IMR-90 (cell line): ENCODE measurements at regions of chr10 and their contacts with region 1.

Region 1: GRCh38 chr10:97072851-97073665 is 112.7 kb downstream of the SLIT1 start:
- DNase-seq: peak; percentile 71
- ATAC-seq: peak; percentile 96
- H3K4me3 ChIP-seq: no peak overlapping the region
- H3K27ac ChIP-seq: no peak overlapping the region
- H3K4me1 ChIP-seq: no peaks in the 10 kb centered on the region
- H3K27me3 ChIP-seq: peaks cover 50% of the 10 kb centered on the region
- CTCF ChIP-seq: peak; percentile 94
- POLR2A ChIP-seq: 0 out of 2 replicates have a peak, but pooled peaks have one; percentile 29
- RAD21 ChIP-seq: peak; percentile 93

Region 2: DNA sequence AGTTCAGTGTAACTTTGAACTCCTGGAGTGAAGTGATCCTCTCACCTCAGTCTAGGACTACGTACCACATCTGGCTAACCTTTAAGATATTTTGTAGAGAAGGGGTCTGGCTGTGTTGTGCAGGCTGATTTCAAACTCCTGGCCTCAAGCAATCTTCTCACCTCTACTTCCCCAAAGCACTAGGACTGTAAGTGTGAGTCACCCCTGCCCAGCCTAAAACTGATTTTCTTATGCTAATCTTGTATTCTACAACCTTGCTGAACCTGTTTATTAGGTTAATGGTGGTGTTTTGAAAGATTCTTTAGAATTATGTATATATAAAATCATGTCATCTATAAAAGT is 182.9 kb before region 1 on chr10:
- CTCF ChIA-PET with region 1: no interaction called
- POLR2A ChIA-PET with region 1: no interaction called
- dilution Hi-C with region 1: no loop called
- in situ Hi-C with region 1: no loop called
- intact Hi-C with region 1: no loop called
- DNase-seq: no peak
- ATAC-seq: no peak
- H3K4me3 ChIP-seq: no peak overlapping the region
- H3K27ac ChIP-seq: no peak overlapping the region
- H3K4me1 ChIP-seq: 0 out of 2 replicates have a peak, but pooled peaks cover 1% of the 10 kb centered on the region
- H3K27me3 ChIP-seq: no peaks in the 10 kb centered on the region
- CTCF ChIP-seq: no peak
- POLR2A ChIP-seq: no peak
- RAD21 ChIP-seq: no peak

Region 3: DNA sequence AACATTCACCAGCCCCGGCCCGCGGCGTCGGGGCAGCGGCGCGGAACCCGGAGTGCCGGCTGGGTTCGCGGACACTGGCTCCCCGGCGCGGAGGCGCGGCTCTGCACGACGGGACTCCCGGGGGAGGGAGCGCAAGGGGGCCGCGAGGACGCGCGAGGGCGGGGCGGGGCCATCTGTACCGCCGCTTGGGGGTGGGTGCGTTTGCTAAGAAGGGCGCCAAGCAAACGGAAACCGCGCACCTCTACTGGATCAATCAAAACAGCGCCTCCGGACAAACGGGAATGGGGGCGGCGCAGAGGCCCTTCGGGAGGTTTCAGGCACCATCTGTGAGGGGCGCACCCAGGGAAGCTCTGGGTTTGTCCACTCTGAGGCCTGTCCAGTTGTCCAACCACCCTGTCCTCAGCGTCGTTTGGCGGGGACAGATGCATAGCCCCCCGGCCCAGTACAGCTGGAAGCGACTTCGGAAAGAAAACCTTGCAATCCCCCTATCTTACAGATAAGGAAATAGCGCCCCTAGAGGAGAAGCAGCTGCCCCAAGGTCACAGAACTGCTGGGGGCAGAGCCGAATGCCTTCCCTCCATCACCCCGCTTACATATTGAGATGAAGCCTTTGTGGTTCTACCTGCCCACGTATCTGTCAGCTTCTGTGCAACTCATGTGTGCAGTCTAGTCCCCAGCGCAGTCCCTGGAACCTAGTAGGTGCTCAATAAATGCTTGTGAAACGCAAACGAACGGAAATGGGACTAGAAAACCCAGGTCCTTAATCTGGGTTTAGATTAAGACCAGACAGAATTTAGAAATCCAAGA is 123.4 kb after region 1 on chr10:
- CTCF ChIA-PET with region 1: interaction called, 6 read pairs
- POLR2A ChIA-PET with region 1: no interaction called
- dilution Hi-C with region 1: no loop called
- in situ Hi-C with region 1: loop called (anchors 10 kb)
- intact Hi-C with region 1: no loop called
- DNase-seq: peak; percentile 43
- ATAC-seq: peak; percentile 91
- H3K4me3 ChIP-seq: peak overlapping the region; percentile 47
- H3K27ac ChIP-seq: no peak overlapping the region
- H3K4me1 ChIP-seq: no peaks in the 10 kb centered on the region
- H3K27me3 ChIP-seq: peaks cover 49% of the 10 kb centered on the region
- CTCF ChIP-seq: peak; percentile 56
- POLR2A ChIP-seq: no peak
- RAD21 ChIP-seq: peak; percentile 31

Region 4: DNA sequence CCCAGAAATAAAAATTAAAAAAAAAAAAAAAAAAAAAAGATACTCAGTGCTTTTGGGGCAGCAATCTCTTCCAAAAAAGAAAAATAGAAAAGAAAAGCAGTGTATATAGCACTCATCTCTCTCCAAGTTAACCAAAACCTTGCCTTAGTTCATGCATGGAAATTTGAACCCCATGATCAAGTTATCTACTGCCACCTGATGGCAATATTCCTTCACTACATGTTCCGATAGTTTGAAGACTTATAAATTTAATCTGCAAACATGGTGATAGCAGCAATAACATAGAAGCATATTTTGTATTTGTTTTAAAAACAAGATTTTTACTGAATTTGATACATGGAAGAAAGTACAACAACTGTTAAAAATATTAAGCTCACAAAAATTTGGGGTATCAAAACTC is 161.3 kb after region 1 on chr10:
- CTCF ChIA-PET with region 1: interaction called, 10 read pairs
- POLR2A ChIA-PET with region 1: no interaction called
- dilution Hi-C with region 1: no loop called
- in situ Hi-C with region 1: no loop called
- intact Hi-C with region 1: loop called (anchors 1 kb)
- DNase-seq: peak; percentile 64
- ATAC-seq: peak; percentile 61
- H3K4me3 ChIP-seq: no peak overlapping the region
- H3K27ac ChIP-seq: no peak overlapping the region
- H3K4me1 ChIP-seq: peaks cover 2% of the 10 kb centered on the region; the same call in 1 of the 2 replicates
- H3K27me3 ChIP-seq: no peaks in the 10 kb centered on the region
- CTCF ChIP-seq: peak; percentile 76
- POLR2A ChIP-seq: no peak
- RAD21 ChIP-seq: peak; percentile 84

Region 5: DNA sequence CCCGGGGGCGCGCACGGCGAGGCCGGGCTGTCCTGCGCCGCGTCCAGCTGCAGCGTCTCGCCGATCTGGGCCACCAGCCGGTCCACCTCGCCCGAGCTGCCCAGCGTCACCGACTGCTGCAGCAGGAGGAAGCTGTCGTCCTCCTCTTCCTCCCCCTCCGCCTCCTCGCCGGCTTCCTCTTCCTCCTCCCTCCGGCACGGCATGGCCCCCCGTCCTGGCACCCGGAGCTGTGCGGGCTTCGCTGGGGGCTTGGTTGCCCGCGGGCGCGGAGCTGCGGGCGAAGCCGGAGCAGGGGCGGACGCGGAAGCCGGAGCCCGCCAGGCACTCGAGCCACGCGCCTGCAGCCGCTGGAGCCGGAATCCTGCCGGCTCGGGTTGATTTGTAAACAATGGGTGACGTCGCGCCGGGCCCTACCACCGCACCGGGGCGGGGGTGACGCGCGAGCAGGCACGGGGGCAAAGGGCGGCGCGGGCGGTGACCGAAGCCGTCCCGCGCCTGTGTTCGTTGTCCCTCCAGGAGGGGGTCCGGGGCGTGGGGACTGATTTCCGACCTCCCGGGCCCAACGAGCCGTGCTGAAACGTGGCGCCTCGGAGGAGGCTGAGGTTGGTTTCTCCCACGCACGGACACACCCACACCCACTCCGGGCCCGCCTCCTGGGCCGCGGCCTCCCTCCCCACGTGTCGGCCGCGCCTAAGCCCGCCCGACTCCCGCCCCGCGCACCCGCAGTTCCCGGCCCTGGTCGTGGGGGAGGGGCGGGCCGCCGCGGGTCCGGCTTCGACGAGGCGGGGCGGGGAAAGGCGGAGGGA is 261.5 kb after region 1 on chr10 and contains the start of gene FRAT2:
- CTCF ChIA-PET with region 1: interaction called, 6 read pairs
- POLR2A ChIA-PET with region 1: no interaction called
- dilution Hi-C with region 1: no loop called
- in situ Hi-C with region 1: no loop called
- intact Hi-C with region 1: loop called (anchors 2 kb)
- DNase-seq: peak; percentile 91
- ATAC-seq: peak; percentile 90
- H3K4me3 ChIP-seq: peak within 1 kb of the TSS; percentile 72
- H3K27ac ChIP-seq: peak within 1 kb of the TSS; percentile 99
- H3K4me1 ChIP-seq: peaks cover 11% of the 10 kb centered on the region
- H3K27me3 ChIP-seq: peaks cover 19% of the 10 kb centered on the region
- CTCF ChIP-seq: no peak
- POLR2A ChIP-seq: peak; percentile 73
- RAD21 ChIP-seq: no peak
- total RNA-seq, gene FRAT2: 2.5 and 2.8 TPM in 2 replicates

Region 6: DNA sequence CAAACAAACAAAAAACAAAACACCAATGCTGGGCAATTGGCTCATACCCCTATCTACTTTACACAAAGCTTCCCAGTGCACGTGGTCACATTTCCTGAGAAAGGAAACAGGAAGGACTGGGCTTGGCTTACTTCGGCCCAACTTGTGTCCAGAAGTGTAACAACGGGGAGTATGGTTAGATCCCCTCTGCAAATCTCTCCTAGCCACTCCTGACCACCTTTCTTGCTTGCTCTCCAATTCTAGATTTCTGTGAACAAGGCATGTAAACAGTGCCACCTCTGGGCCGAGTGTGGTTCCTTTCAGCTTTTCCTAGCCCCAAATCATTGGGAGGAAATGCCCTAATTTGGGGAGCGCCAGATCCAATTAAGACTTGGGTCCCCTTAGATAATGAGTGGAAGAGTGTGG is 282.5 kb after region 1 on chr10:
- CTCF ChIA-PET with region 1: no interaction called
- POLR2A ChIA-PET with region 1: no interaction called
- dilution Hi-C with region 1: no loop called
- in situ Hi-C with region 1: loop called (anchors 10 kb)
- intact Hi-C with region 1: no loop called
- DNase-seq: no peak
- ATAC-seq: peak; percentile 27; the same call in 1 of the 2 replicates
- H3K4me3 ChIP-seq: no peak overlapping the region
- H3K27ac ChIP-seq: no peak overlapping the region
- H3K4me1 ChIP-seq: no peaks in the 10 kb centered on the region
- H3K27me3 ChIP-seq: no peaks in the 10 kb centered on the region
- CTCF ChIP-seq: peak; percentile 31
- POLR2A ChIP-seq: no peak
- RAD21 ChIP-seq: peak; percentile 37